Left cardiac atrium (tissue), 4 donors: ENCODE measurements at regions of chr15 and their contacts with region 1.

Region 1: GRCh38 chr15:75578948-75579920 is at the start of gene PTPN9:
- DNase-seq: peak; percentile 83
- ATAC-seq: peak; percentile 89 to 91
- total RNA-seq, gene PTPN9: 12.5 to 13.4 TPM

Region 2: GRCh38 chr15:75420698-75421097 is 158.5 kb before region 1 on chr15:
- intact Hi-C with region 1: no loop called
- DNase-seq: no peak
- ATAC-seq: no peak

Region 3: GRCh38 chr15:75453703-75454470 is 125.3 kb before region 1 on chr15:
- intact Hi-C with region 1: loop called in 1 of 2 experiments (anchors 10 kb)
- DNase-seq: peak; percentile 98
- ATAC-seq: peak; percentile 62 to 66

Region 4: DNA sequence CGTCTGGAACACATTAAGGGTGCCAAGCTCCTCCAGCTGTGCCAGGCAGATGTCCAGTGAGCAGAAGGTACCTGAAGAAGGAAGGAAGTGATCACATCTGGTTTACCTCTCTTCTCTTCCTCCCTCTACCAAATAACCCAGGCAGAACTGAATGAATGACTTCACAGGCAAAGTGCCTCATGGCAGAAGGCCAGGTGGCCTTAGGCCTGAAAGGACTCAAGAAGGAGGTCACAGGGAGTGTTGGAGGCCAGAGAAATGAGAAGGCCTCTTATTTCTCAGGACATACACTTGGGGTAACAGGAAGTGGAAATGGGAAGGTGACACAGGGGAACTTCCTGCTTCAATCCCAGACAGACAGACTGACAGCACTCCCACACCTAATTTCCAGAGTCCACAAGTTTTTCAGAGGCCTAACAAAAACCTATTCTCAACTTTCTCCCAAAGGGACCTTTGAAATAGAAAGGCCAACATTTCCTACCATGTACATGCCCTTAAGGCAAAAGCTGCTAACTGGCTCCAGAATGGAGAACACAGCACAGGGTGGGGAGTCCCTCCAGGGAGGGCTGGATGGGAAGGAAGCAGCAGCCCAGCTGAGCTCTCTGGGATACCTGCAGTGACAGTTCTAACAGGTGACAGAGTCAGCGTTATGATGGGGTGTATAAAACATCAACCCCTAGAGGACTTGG is 110.2 kb before region 1 on chr15:
- intact Hi-C with region 1: no loop called
- DNase-seq: no peak
- ATAC-seq: no peak

Region 5: DNA sequence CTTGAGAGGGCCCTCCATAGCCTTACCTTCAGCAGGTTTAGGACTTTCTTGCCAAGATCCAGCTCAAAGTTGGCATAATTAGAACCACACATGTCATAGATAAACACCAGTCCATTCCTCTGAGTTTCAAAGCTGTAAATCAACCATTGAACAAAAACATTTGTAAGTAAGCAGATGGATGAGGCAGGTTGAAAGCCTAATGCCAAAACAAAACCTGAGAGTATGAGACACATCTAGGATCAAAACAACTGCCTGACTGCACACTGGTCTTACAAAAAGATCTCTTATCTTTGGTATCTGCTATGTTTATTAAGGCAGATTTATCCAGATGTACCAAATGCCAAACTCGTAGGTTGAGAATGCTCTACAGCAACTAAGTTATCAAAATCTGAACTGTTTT is 62.0 kb before region 1 on chr15:
- intact Hi-C with region 1: loop called (anchors 10 kb)
- DNase-seq: no peak
- ATAC-seq: no peak

Region 6: DNA sequence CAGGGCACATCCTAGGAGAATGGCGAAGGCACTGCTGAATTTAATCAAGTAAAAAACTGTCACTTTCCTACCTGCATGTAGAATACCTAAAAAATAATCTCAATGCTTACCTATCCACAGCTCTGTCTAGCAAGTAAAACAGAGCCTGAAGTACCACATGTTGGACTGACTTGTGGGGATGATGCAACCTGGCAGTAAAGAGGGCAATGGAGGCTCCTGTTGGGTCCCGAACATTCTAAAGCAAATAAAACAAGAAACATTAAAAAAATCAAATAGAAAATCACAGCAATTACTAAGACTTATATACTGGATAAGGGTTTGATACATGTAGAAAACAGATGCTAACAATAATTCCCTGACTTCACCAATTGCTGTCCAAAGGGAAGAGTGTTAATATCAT is 56.2 kb before region 1 on chr15:
- intact Hi-C with region 1: loop called (anchors 10 kb)
- DNase-seq: no peak
- ATAC-seq: no peak

Region 7: GRCh38 chr15:75532413-75533147 is 46.7 kb before region 1 on chr15:
- intact Hi-C with region 1: loop called (anchors 5 to 10 kb)
- DNase-seq: peak; percentile 58
- ATAC-seq: peak; percentile 89 to 94

Region 8: DNA sequence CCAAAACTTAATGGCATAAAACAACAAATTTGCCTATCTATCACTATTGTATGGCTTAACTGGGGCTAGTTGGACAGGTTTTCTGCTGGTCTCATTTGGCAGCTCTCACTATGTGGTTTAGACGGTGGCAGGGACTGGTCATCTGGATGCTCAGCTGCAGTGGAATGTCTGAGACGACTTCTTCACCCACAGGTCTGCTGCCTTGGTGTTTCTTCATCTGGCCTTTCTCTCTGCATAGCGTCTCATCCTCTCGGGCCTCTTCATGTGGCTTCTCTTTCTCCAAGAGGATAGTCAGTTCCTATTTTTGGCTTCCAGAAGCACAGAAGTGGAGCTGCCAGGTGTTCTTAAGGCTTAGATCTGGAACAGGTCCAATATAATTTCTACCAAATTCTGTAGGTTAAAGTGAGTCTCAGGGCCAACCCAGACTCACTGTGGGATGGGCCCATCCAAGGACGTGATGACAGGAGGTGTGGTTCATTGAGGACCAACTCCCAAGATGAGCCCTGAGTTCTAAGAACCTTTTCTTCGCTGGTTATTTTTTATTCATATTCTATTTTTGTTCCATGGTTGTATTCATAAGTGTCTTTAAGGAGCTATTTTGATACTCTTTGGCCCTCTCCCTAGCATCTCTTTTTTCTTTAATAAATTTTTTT is 282.6 kb after region 1 on chr15:
- intact Hi-C with region 1: no loop called
- DNase-seq: no peak
- ATAC-seq: no peak